ENCODE measurements at regions of chr19 and their contacts with region 1.

Region 1: DNA sequence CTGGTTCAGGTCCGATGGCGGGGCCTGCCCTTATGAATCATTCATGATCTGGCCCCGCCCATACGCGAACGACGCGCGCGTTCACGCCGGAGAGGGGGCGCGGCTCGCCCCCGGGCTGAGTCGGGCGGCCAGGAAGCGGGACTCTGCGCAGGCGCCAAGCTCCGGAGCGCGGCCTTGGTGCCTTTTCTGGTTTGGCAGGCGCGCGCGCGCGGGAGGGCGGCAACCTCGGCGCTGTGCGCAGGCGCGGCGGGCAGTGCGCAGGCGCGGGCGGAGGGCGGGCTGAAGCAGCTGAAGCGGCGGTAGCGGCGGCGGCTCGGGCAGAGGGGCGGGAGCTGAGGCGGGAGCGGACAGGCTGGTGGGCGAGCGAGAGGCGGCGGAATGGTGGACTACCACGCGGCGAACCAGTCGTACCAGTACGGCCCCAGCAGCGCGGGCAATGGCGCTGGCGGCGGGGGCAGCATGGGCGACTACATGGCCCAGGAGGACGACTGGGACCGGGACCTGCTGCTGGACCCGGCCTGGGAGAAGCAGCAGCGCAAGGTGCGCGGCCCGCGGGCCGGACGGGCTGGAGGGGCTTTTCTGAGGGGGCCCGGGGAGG is at the start of gene ACTN4:
- DNase-seq: peak; percentile 99
- ATAC-seq: peak; percentile 91 to 92
- total RNA-seq, gene ACTN4: 160 to 333 TPM

Region 2: GRCh38 chr19:38425810-38426466 is 221.5 kb before region 1 on chr19 and contains the start of gene RASGRP4:
- intact Hi-C with region 1: no loop called
- DNase-seq: peak; percentile 38
- ATAC-seq: peak in 1 of 2 donors; percentile 72
- total RNA-seq, gene RASGRP4: 1.8 to 3.6 TPM

Region 3: GRCh38 chr19:38707512-38708114 is 60.1 kb after region 1 on chr19:
- intact Hi-C with region 1: loop called in 1 of 2 experiments (anchors 5 kb)
- DNase-seq: peak; percentile 88
- ATAC-seq: peak; percentile 23 to 40

Region 4: DNA sequence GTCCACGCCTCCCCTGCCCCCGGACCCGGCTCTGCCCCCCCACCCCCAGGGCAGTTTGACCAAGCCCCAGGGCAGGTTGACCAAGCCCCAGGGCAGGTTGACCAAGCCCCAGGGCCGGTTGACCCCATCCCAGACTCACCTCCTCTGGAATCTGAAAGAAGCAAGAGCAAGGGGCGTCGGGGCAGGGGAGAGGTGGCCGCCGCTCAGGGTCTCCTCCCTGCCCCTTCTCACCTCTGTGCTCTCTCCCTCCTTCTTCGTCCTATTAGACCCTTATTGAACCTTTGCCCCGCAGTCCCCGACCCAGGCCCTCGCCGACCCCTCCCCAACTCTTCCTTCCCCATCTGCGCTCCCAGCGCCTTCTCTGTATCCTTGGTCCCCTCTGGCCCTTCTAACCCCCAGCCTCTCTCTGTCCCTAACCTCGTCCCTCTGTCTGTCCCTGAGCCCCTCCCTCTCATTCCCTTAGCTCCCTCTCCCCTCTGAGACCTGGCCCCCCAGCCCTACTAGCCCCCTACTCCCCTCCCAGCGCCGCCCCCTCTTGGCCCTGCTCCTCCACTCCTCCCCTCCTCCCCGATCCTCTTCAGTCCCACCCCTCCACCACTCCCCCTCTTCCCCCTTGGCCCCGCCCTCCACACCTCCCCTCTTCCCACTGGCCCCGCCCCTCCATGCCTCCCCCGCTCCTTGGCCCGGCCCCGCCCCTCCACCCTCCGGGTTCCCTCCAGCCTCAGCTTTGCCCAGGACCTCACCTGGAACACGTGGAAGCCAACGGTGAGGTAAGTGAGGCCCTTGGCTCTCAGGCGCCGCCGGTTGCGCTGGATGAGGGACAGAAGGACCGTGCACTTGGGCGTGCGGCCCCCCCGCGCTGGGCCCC is 89.2 kb after region 1 on chr19:
- intact Hi-C with region 1: no loop called
- DNase-seq: peak; percentile 66
- ATAC-seq: peak; percentile 18

Region 5: DNA sequence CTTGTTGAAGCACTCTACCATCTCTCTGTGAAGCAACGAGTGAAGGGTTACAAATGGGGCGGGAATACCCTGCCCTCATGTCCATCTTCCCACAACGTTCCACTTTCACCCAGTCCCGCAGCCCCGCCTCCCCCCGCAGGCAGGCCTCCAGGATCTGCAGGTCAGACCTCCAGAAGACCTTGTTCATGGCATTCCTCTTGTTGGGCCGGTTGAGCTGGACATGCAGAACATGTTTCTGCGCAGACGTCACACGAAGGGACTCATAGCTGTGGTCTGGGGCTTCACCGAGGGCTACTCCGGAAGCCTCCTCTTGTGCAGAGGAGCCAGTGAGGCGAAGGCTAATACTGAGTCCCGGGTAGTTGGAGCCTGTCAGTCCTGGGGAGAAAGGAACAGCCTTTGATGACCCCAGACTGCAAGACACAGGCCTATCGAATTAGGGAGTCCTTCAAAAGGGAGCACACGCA is 183.7 kb after region 1 on chr19:
- intact Hi-C with region 1: loop called in 1 of 2 experiments (anchors 5 kb)
- DNase-seq: peak; percentile 70
- ATAC-seq: peak; percentile 51 to 60

Region 6: DNA sequence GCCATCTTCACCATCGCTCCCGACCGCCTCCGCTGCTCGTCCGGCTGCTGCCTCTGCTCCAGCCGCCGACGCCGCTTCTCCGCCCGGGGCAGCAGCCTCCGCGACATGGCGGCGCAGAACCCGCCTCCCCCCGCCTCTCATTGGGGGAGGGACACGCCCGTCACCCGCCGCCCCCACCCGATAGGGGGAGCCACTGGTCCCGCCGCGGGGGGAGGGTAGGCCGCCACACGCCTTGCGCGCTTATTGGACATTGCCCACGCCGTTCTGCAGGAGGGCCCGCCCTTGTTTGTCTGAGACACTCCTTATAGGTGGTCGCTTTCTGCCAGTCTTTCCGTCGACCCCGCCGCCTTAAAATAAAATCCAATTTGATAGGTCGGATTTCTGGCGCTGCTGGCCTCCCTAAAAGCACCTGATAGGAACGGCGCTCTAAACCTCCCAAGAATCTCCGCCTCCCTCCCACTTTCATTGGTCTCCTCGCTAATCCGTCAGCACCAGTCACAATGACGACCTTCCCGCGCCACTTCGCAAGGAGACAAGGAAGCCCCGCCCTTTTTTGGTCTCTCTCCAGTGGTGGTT is 202.5 kb after region 1 on chr19 and contains the start of gene HNRNPL:
- intact Hi-C with region 1: loop called (anchors 5 to 10 kb)
- DNase-seq: peak; percentile 99
- ATAC-seq: peak; percentile 76 to 82
- total RNA-seq, gene HNRNPL: 179 to 185 TPM

Region 7: GRCh38 chr19:38929929-38930775 is 282.7 kb after region 1 on chr19 and contains the start of gene SARS2:
- intact Hi-C with region 1: loop called in 1 of 2 experiments (anchors 10 kb)
- DNase-seq: peak; percentile 93
- ATAC-seq: peak; percentile 88 to 91
- total RNA-seq, gene SARS2: 9.5 to 17.7 TPM